ENCODE measurements at regions of chr20 and their contacts with region 1.

Region 1: GRCh38 chr20:33506576-33506975 is 16.7 kb downstream of the CBFA2T2 start:
- DNase-seq: no peak
- ATAC-seq: no peak
- H3K4me3 ChIP-seq: no peak overlapping the region
- H3K27ac ChIP-seq: no peak overlapping the region
- H3K4me1 ChIP-seq: peaks cover 5% of the 10 kb centered on the region; the same call in 1 of the 2 replicates
- H3K27me3 ChIP-seq: no peaks in the 10 kb centered on the region
- CTCF ChIP-seq: no peak
- EP300 ChIP-seq: no peak
- POLR2A ChIP-seq: no peak
- RAD21 ChIP-seq: no peak

Region 2: DNA sequence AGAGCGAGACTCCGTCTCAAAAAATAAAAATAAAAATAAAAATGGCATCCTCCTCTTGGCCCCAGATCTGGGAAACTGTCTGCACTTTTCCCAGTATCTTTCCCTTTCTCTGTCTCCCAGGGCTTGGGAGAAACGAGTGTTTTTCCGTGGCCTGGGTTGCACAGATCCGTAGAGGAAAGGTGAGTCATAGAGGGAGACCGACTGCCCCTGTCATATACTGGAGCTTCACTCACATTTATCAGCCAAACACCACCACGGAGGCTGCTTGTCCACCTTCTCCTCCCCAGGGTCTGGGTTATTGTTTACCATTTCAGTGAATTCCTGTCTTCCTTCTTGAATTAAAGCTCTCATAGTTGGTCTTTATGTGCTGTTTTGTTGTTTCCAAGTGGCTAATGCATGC is 637.4 kb after region 1 on chr20:
- CTCF ChIA-PET with region 1: no interaction called
- POLR2A ChIA-PET with region 1: no interaction called
- RAD21 ChIA-PET with region 1: no interaction called
- SMC1A ChIA-PET with region 1: no interaction called
- in situ Hi-C with region 1: no loop called
- intact Hi-C with region 1: loop called (anchors 5 kb)
- DNase-seq: no peak
- ATAC-seq: no peak
- H3K4me3 ChIP-seq: no peak overlapping the region
- H3K27ac ChIP-seq: no peak overlapping the region
- H3K4me1 ChIP-seq: no peaks in the 10 kb centered on the region
- H3K27me3 ChIP-seq: no peaks in the 10 kb centered on the region
- CTCF ChIP-seq: no peak
- EP300 ChIP-seq: no peak
- POLR2A ChIP-seq: no peak
- RAD21 ChIP-seq: no peak

Measured in GM12878 (cell line).